ENCODE measurements at regions of chr5 and their contacts with region 1.

Region 1: GRCh38 chr5:142151436-142152383 is 43.1 kb downstream of the NDFIP1 start:
- DNase-seq: peak; percentile 40 to 64 (median 49)
- ATAC-seq: no peak
- H3K4me3 ChIP-seq: no peak overlapping the region
- H3K27ac ChIP-seq: no peak overlapping the region
- H3K4me1 ChIP-seq: no peaks in the 10 kb centered on the region
- H3K27me3 ChIP-seq: no peaks in the 10 kb centered on the region
- CTCF ChIP-seq: peak; percentile 44 to 79 (median 69)
- POLR2A ChIP-seq: no peak

Region 2: DNA sequence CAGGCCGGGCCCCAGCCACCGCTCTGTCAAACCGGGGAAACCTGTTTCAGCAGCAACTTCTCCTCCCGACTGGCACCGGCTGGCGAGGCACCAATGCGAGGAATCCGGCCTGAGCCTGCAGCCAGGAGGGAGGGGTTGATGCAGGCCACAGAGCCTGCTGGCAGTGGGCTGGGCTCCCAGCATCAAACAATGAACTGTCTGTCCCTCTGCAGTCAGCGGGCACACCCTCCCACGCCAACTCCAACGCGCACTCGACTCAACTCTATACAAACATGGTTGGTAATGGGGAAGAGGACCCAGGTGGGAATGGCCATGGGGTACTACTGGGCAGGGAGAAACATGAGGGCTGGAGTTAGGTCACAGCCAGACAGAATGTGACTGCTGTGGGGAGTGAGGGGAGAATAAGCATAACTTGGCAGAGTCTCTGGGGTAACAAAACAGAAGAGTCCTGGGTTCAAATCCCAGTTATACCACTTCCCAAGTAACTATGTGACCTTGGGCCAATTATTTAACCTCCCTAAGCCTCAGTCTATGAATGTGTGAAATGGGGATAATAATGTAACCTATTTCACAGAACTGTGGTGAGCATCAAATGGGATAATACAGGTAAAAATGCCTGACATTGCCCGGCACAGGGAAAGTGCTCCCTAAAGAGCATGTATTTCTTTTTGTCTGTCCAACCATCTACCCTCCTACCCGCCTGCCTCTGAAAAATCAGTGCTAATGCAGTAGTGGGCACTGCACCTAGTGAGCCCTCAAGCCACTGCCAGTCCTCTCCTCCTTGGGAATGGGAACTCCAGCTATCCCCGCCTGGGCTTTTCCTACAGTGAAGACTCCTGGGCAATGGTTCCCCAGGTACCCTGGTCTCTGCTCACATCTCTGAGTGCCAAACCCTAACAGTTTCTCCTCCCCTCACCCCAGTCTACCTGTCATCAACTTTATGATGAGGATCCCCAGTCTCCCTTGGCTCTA is 285.3 kb before region 1 on chr5:
- intact Hi-C with region 1: no loop called
- DNase-seq: peak; percentile 74 to 91 (median 90)
- ATAC-seq: peak; percentile 92
- H3K4me3 ChIP-seq: no peak overlapping the region
- H3K27ac ChIP-seq: peak overlapping the region; percentile 77 to 83 (median 80)
- H3K4me1 ChIP-seq: peaks cover 33% of the 10 kb centered on the region
- H3K27me3 ChIP-seq: no peaks in the 10 kb centered on the region
- CTCF ChIP-seq: no peak
- POLR2A ChIP-seq: peak in 1 of 3 donors; percentile 16

Region 3: DNA sequence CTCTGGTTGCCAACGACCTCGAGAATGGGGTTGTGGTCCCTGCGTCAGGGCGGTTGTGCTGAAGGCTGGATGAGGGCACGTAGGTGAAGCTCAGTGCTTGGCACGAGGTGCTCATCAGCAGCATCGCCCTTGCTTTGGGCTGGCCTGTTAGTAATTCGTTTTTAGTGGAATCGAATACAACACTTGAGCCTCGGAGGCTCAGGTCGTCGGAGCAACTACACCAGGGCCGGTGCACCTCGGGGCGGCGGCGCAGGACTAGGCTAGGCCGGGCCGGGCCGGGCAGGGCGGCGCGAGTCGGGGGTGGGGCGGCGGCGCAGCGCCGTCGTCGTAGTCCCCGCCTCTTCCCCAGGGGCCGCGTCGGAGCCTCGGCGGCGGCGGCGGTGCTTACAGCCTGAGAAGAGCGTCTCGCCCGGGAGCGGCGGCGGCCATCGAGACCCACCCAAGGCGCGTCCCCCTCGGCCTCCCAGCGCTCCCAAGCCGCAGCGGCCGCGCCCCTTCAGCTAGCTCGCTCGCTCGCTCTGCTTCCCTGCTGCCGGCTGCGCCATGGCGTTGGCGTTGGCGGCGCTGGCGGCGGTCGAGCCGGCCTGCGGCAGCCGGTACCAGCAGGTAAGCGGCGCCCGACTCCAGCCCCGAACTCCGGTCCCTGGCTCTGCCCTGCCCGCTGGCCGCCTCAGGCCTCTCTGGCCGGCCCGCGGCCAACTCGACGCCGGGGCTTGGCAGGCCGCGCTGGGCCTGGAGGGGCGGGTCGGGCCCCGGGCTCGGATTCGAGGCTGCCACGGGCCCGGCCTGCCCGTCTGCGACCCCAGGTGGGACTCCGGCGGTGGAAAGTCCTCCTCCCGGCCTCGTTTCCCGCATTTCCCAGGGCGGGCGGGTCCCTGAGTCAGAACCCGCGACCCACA is 43.0 kb before region 1 on chr5 and contains the start of gene NDFIP1:
- intact Hi-C with region 1: no loop called
- DNase-seq: peak; percentile 85 to 89 (median 86)
- ATAC-seq: peak; percentile 98
- H3K4me3 ChIP-seq: peak within 1 kb of the TSS; percentile 47 to 65
- H3K27ac ChIP-seq: peak within 1 kb of the TSS; percentile 97 to 100 (median 98)
- H3K4me1 ChIP-seq: peaks cover 30% of the 10 kb centered on the region
- H3K27me3 ChIP-seq: no peaks in the 10 kb centered on the region
- CTCF ChIP-seq: peak in 3 of 7 experiments; percentile 27 to 49 (median 31)
- POLR2A ChIP-seq: peak; percentile 85 to 96 (median 92)
- total RNA-seq, gene NDFIP1: 39.7 to 58.3 TPM

Region 4: DNA sequence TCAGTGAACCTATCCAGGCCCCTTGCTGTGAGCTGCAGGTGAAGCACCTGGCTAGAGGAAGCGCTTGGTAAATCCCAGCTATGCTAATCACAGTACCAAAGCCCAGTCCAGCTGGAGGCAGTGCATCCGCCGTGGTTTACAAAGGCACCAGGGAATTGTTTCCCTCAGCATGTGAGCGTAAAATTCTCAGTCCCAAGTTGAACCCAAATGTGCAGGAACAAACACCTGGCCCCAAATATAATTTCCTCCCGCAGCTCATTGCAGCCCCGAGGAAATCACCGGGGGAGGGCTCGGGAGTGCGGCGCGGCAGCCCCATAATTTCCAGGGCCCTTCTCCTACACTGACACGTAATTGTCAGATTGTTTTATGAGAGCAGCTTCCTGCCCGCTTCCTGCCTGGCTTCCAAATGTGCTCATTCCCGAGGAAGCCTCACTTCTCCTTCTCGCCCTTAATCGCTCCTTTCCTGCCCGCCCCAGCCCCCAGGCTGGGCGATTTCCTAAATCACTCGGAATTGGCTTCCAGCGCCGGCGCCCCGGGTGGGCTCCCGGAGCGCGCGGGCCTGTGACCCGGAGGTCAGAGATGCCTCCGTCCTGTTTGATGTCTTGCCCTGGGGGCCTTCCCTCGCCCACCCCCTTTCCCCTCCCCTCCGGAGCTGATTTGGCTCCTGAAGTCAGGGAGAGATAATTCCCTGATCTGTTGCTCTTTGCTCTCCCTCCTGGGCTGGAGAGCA is 399.8 kb after region 1 on chr5:
- intact Hi-C with region 1: loop called (anchors 10 kb)
- DNase-seq: no peak
- ATAC-seq: no peak
- H3K4me3 ChIP-seq: no peak overlapping the region
- H3K27ac ChIP-seq: no peak overlapping the region
- H3K4me1 ChIP-seq: no peaks in the 10 kb centered on the region
- H3K27me3 ChIP-seq: no peaks in the 10 kb centered on the region
- CTCF ChIP-seq: no peak
- POLR2A ChIP-seq: no peak